Naive thymus-derived CD4-positive, alpha-beta T cell (primary cell): ENCODE measurements at regions of chr17 and their contacts with region 1.

Region 1: GRCh38 chr17:28951991-28952975 is 965 bp upstream of the PHF12 start:
- DNase-seq: peak; percentile 79 to 99 (median 96)
- ATAC-seq: peak; percentile 82
- H3K4me3 ChIP-seq: peak overlapping the region; percentile 84
- H3K4me3 Mint-ChIP-seq: no peak overlapping the region
- H3K27ac ChIP-seq: peak overlapping the region; percentile 81
- H3K27ac Mint-ChIP-seq: no peak overlapping the region
- H3K4me1 ChIP-seq: peaks cover 19 to 26% of the 10 kb centered on the region in 2 donors
- H3K4me1 Mint-ChIP-seq: peaks cover 12 to 24% (median 14%) of the 10 kb centered on the region in 7 donors
- H3K27me3 ChIP-seq: no peaks in the 10 kb centered on the region
- H3K27me3 Mint-ChIP-seq: peaks cover 0 to 4% (median 0%) of the 10 kb centered on the region in 5 donors

Region 2: DNA sequence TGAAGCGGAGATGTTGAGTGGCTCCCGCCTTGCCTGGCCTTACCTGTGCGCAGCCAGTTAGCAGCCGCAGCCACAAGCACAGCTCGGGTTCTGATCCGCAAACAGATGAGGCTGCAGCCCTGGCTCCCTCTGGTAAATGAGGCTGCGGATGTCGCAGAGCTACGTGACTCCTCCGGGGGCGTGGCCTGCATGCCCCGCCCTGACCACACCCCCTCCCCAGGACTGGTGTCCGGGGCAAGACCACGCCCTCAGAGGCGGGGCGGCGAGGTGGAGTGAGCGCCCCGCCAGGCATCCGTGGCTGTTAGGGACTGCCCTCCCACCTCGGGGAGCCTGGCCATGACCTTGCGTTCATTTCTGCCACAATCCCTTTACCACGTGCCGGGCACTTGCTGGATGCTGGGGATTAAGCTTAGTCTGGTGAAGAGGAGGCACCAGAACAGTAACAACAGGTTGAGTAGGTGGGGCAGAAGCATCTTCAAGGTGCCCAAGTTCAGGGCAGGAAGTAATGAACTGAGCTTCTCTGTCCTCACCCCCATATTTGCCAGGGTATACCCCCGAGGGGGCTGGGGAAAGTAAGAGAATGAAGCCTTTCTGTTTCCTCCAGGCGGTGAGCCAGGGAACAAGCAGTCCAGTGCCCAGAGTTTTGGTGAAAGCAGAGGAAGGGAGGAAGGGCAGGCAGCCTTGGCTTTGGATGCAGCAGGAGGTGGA is 375.4 kb before region 1 on chr17 and contains the start of gene ALDOC:
- CTCF ChIA-PET with region 1: no interaction called
- POLR2A ChIA-PET with region 1: interaction called, 9 read pairs
- intact Hi-C with region 1: loop called in 1 of 2 experiments (anchors 1 kb)
- DNase-seq: peak; percentile 95 to 99 (median 98)
- ATAC-seq: peak; percentile 100
- H3K4me3 ChIP-seq: peak within 1 kb of the TSS; percentile 50
- H3K4me3 Mint-ChIP-seq: peak within 1 kb of the TSS; percentile 83 to 96 (median 86)
- H3K27ac ChIP-seq: peak within 1 kb of the TSS; percentile 52
- H3K27ac Mint-ChIP-seq: peak within 1 kb of the TSS; percentile 79 to 95 (median 89)
- H3K4me1 ChIP-seq: peaks cover 19 to 23% of the 10 kb centered on the region in 2 donors
- H3K4me1 Mint-ChIP-seq: peaks cover 20 to 70% (median 38%) of the 10 kb centered on the region in 7 donors
- H3K27me3 ChIP-seq: no peaks in the 10 kb centered on the region
- H3K27me3 Mint-ChIP-seq: no peaks in the 10 kb centered on the region
- total RNA-seq, gene ALDOC: 24.5 to 159 (median 40.1) TPM

Region 3: DNA sequence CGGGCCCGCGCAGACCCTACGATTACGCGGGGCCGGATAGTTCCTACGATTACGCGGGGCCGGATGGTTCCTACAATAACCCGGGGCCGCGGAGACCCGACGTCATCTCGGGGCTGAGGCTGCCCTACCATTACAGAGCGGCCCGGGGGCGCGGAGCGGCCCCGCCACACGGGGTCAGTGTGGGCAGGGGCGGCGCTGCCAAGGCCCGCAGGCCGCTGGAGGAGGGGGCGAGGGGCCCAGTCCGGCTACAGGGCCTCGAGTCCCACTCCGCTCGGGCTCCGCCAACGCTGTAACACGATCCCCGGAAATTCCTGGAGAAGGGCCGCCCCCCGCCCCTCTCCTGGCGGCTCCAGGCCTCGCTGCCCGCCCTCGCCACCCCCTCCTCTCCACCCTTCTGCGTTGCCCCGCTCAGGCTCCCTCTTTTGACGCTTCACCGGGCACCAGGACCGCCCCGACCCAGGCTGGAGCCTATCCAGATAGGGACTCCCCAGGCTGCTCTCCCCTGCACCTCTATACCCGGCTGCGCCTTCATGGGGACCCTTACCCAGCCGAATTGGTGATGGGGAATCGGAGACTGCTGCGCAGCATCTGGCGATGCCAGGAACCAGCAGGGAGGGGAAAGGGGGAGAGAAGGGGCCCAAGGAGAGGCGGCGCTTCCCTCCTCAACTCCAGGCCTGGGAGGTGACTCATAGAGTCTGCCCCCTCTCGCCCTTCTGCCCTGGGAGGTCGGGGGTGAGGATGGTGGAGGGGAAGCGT is 234.5 kb before region 1 on chr17 and contains the start of gene RAB34:
- CTCF ChIA-PET with region 1: interaction called, 9 read pairs
- POLR2A ChIA-PET with region 1: interaction called, 96 read pairs
- intact Hi-C with region 1: loop called (anchors 1 kb)
- DNase-seq: peak in 2 of 9 donors; percentile 18 to 21
- ATAC-seq: no peak
- H3K4me3 ChIP-seq: no peak within 1 kb of the TSS
- H3K4me3 Mint-ChIP-seq: peak within 1 kb of the TSS; percentile 58 to 99 (median 76)
- H3K27ac ChIP-seq: peak within 1 kb of the TSS; percentile 52
- H3K27ac Mint-ChIP-seq: peak within 1 kb of the TSS; percentile 59 to 97 (median 85)
- H3K4me1 ChIP-seq: peaks cover 26 to 30% of the 10 kb centered on the region in 2 donors
- H3K4me1 Mint-ChIP-seq: peaks cover 17 to 57% (median 35%) of the 10 kb centered on the region in 7 donors
- H3K27me3 ChIP-seq: no peaks in the 10 kb centered on the region
- H3K27me3 Mint-ChIP-seq: peaks cover 0 to 24% (median 6%) of the 10 kb centered on the region in 5 donors
- total RNA-seq, gene RAB34: 11.0 to 50.2 (median 16.4) TPM

Region 4: GRCh38 chr17:28842282-28843012 is 109.8 kb before region 1 on chr17 and contains the start of gene FAM222B:
- CTCF ChIA-PET with region 1: no interaction called
- POLR2A ChIA-PET with region 1: no interaction called
- intact Hi-C with region 1: loop called in 1 of 2 experiments (anchors 1 kb)
- DNase-seq: peak; percentile 80 to 91 (median 86)
- ATAC-seq: peak; percentile 98
- H3K4me3 ChIP-seq: peak within 1 kb of the TSS; percentile 77
- H3K4me3 Mint-ChIP-seq: peak within 1 kb of the TSS; percentile 96 to 100 (median 98)
- H3K27ac ChIP-seq: peak within 1 kb of the TSS; percentile 78
- H3K27ac Mint-ChIP-seq: peak within 1 kb of the TSS; percentile 83 to 97 (median 92)
- H3K4me1 ChIP-seq: peaks cover 8 to 13% of the 10 kb centered on the region in 2 donors
- H3K4me1 Mint-ChIP-seq: peaks cover 6 to 31% (median 26%) of the 10 kb centered on the region in 7 donors
- H3K27me3 ChIP-seq: no peaks in the 10 kb centered on the region
- H3K27me3 Mint-ChIP-seq: no peaks in the 10 kb centered on the region
- total RNA-seq, gene FAM222B: 16.5 to 24.4 (median 22.3) TPM

Region 5: GRCh38 chr17:28916302-28916934 is 35.9 kb before region 1 on chr17:
- CTCF ChIA-PET with region 1: interaction called, 8 read pairs
- POLR2A ChIA-PET with region 1: interaction called, 12 read pairs
- intact Hi-C with region 1: loop called in 1 of 2 experiments (anchors 5 kb)
- DNase-seq: peak in 6 of 9 donors; percentile 38 to 50 (median 42)
- ATAC-seq: peak; percentile 90
- H3K4me3 ChIP-seq: no peak overlapping the region
- H3K4me3 Mint-ChIP-seq: no peak overlapping the region
- H3K27ac ChIP-seq: peak overlapping the region; percentile 46
- H3K27ac Mint-ChIP-seq: peak overlapping the region in 7 of 9 donors; percentile 46 to 93 (median 65)
- H3K4me1 ChIP-seq: no peaks in the 10 kb centered on the region
- H3K4me1 Mint-ChIP-seq: peaks cover 0 to 9% (median 6%) of the 10 kb centered on the region in 7 donors
- H3K27me3 ChIP-seq: no peaks in the 10 kb centered on the region
- H3K27me3 Mint-ChIP-seq: no peaks in the 10 kb centered on the region

Region 6: GRCh38 chr17:29293890-29294579 is 341.8 kb after region 1 on chr17 and contains the start of gene NUFIP2:
- CTCF ChIA-PET with region 1: interaction called, 3 read pairs
- POLR2A ChIA-PET with region 1: interaction called, 13 read pairs
- intact Hi-C with region 1: loop called (anchors 1 kb)
- DNase-seq: peak; percentile 93 to 99 (median 98)
- ATAC-seq: peak; percentile 93
- H3K4me3 ChIP-seq: peak within 1 kb of the TSS; percentile 98
- H3K4me3 Mint-ChIP-seq: peak within 1 kb of the TSS; percentile 99 to 100 (median 100)
- H3K27ac ChIP-seq: peak within 1 kb of the TSS; percentile 90
- H3K27ac Mint-ChIP-seq: peak within 1 kb of the TSS; percentile 97 to 100 (median 99)
- H3K4me1 ChIP-seq: peaks cover 28 to 36% of the 10 kb centered on the region in 2 donors
- H3K4me1 Mint-ChIP-seq: peaks cover 26 to 45% (median 41%) of the 10 kb centered on the region in 7 donors
- H3K27me3 ChIP-seq: no peaks in the 10 kb centered on the region
- H3K27me3 Mint-ChIP-seq: peaks cover 0 to 4% (median 0%) of the 10 kb centered on the region in 5 donors
- total RNA-seq, gene NUFIP2: 60.4 to 85.3 (median 73.0) TPM

Region 7: DNA sequence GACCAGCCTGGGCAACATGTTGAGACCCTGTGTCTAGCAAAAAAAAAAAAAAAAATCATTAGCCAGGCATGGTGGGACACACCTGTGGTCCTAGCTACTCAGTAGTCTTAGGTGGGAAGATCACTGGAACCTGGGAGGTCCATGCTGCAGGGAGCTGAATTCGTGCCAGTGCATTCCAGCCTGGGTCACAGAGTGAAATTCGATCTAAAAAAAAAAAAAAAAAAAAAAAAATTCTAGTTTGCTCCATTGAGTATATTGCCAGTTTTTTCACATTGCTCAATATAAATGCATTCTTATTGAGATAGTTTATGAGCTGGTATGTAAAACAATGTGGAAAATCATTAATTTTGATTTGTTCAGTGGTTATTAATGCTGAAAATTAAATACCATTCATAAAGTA is 562.5 kb after region 1 on chr17:
- CTCF ChIA-PET with region 1: no interaction called
- POLR2A ChIA-PET with region 1: no interaction called
- intact Hi-C with region 1: no loop called
- DNase-seq: no peak
- ATAC-seq: no peak
- H3K4me3 ChIP-seq: no peak overlapping the region
- H3K4me3 Mint-ChIP-seq: no peak overlapping the region
- H3K27ac ChIP-seq: no peak overlapping the region
- H3K27ac Mint-ChIP-seq: peak overlapping the region in 1 of 9 donors; percentile 59
- H3K4me1 ChIP-seq: no peaks in the 10 kb centered on the region
- H3K4me1 Mint-ChIP-seq: peaks cover 0 to 1% (median 0%) of the 10 kb centered on the region in 7 donors
- H3K27me3 ChIP-seq: no peaks in the 10 kb centered on the region
- H3K27me3 Mint-ChIP-seq: no peaks in the 10 kb centered on the region